ENCODE measurements at regions of chr6 and their contacts with region 1.

Region 1: GRCh38 chr6:43454696-43455530 is 435 bp downstream of the DLK2 start:
- DNase-seq: peak in 1 of 2 experiments; percentile 58
- H3K4me3 ChIP-seq: peak overlapping the region; percentile 19 to 63 (median 40)
- H3K27ac ChIP-seq: no peak overlapping the region
- H3K4me1 ChIP-seq: peaks cover 0 to 4% (median 2%) of the 10 kb centered on the region in 4 experiments; a peak in 3 of 7 replicates
- H3K27me3 ChIP-seq: peaks cover 7 to 25% (median 19%) of the 10 kb centered on the region in 4 experiments
- CTCF ChIP-seq: no peak
- EP300 ChIP-seq: no peak
- POLR2A ChIP-seq: no peak; a peak in 1 of 3 replicates
- RAD21 ChIP-seq: no peak

Region 2: DNA sequence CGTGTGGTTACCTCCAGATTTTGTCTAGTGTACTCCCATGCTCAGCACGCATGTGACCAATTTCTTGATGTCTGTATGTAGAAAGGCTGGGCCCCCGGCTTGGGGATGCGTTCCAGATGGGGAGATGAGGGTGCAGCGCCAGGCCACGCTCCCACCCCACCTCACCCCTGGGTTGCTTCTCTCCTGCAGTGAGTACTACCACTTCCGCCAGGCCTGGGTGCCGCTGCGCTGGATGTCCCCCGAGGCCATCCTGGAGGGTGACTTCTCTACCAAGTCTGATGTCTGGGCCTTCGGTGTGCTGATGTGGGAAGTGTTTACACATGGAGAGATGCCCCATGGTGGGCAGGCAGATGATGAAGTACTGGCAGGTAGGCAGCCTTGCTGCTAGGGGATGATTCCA is 295.3 kb before region 1 on chr6:
- CTCF ChIA-PET with region 1: no interaction called
- POLR2A ChIA-PET with region 1: no interaction called
- DNase-seq: no peak
- H3K4me3 ChIP-seq: no peak overlapping the region
- H3K27ac ChIP-seq: no peak overlapping the region
- H3K4me1 ChIP-seq: no peaks in the 10 kb centered on the region
- H3K27me3 ChIP-seq: no peaks in the 10 kb centered on the region
- CTCF ChIP-seq: no peak
- EP300 ChIP-seq: no peak
- POLR2A ChIP-seq: no peak
- RAD21 ChIP-seq: no peak

Region 3: DNA sequence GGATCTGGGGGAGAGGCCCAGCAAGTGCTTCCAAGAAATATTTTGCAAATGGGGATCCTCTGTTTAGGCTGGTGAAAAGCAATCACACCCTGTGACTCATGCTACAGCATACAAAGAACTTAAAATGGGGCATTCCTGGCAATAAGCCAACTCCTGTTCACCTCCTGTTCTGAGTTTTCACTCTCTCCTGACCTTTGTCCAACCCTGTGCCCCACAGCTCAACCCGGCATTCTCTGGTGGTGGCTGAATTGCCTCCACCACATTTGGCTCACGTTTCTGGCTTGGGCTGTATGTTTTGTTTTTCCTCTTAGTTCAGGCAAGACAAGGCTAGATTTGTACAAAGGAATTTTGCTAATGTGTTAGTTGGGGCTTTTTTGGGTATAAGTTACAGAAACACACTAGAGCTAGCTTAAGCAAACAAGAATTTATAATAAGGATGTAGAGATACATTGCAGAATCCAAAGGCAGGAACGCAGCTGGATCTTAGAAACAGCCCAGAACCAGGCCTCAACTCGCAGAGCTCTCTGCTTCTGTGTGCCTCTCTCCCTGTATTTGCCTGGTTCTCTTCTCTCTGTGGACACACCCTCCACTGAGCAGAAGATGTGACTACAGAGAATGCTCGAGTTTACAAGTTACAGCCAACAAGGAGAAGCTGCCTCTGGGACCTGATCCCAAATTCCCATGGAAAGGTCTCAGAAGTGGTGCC is 18.2 kb before region 1 on chr6:
- CTCF ChIA-PET with region 1: interaction called, 46 read pairs
- POLR2A ChIA-PET with region 1: interaction called, 34 read pairs
- DNase-seq: no peak
- H3K4me3 ChIP-seq: no peak overlapping the region
- H3K27ac ChIP-seq: no peak overlapping the region
- H3K4me1 ChIP-seq: no peaks in the 10 kb centered on the region; a peak in 2 of 7 replicates
- H3K27me3 ChIP-seq: no peaks in the 10 kb centered on the region
- CTCF ChIP-seq: no peak
- EP300 ChIP-seq: no peak
- POLR2A ChIP-seq: no peak
- RAD21 ChIP-seq: no peak

Region 4: GRCh38 chr6:43444036-43444435 is 10.9 kb before region 1 on chr6:
- CTCF ChIA-PET with region 1: interaction called, 21 read pairs
- POLR2A ChIA-PET with region 1: interaction called, 34 read pairs
- DNase-seq: no peak
- H3K4me3 ChIP-seq: no peak overlapping the region
- H3K27ac ChIP-seq: no peak overlapping the region
- H3K4me1 ChIP-seq: no peaks in the 10 kb centered on the region
- H3K27me3 ChIP-seq: no peaks in the 10 kb centered on the region
- CTCF ChIP-seq: no peak
- EP300 ChIP-seq: no peak
- POLR2A ChIP-seq: no peak
- RAD21 ChIP-seq: no peak

Region 5: GRCh38 chr6:43465948-43466347 is 11.0 kb after region 1 on chr6:
- CTCF ChIA-PET with region 1: interaction called, 17 read pairs
- POLR2A ChIA-PET with region 1: interaction called, 10 read pairs
- DNase-seq: no peak
- H3K4me3 ChIP-seq: no peak overlapping the region
- H3K27ac ChIP-seq: no peak overlapping the region
- H3K4me1 ChIP-seq: peaks cover 0 to 8% (median 5%) of the 10 kb centered on the region in 4 experiments; a peak in 4 of 7 replicates
- H3K27me3 ChIP-seq: no peaks in the 10 kb centered on the region; a peak in 1 of 7 replicates
- CTCF ChIP-seq: no peak
- EP300 ChIP-seq: no peak
- POLR2A ChIP-seq: no peak
- RAD21 ChIP-seq: no peak

Region 6: GRCh38 chr6:43471399-43471798 is 16.5 kb after region 1 on chr6:
- CTCF ChIA-PET with region 1: interaction called, 17 read pairs
- POLR2A ChIA-PET with region 1: interaction called, 10 read pairs
- DNase-seq: no peak
- H3K4me3 ChIP-seq: no peak overlapping the region
- H3K27ac ChIP-seq: no peak overlapping the region
- H3K4me1 ChIP-seq: peaks cover 0 to 8% (median 5%) of the 10 kb centered on the region in 4 experiments; a peak in 4 of 7 replicates
- H3K27me3 ChIP-seq: no peaks in the 10 kb centered on the region
- CTCF ChIP-seq: no peak
- EP300 ChIP-seq: no peak
- POLR2A ChIP-seq: no peak
- RAD21 ChIP-seq: no peak

Region 7: DNA sequence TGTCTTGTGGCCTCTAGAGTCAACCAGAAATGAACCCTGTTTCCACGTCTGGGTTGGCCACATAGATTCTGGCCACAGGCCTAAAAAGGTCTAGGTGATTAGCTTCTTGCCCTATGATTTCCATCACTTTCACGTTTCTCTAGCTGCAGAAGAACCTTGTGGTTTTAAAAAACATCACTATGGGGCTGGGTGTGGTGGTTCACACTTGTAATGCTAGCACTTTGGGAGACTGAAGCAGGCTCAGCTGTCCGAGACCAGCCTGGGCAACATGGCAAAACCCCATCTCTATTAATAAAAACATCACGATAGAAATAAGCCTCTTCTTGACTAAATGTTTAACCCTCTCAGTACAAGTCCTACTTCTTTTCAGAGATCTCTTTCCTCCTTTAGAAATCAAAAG is 89.5 kb after region 1 on chr6:
- CTCF ChIA-PET with region 1: no interaction called
- POLR2A ChIA-PET with region 1: no interaction called
- DNase-seq: no peak
- H3K4me3 ChIP-seq: no peak overlapping the region
- H3K27ac ChIP-seq: no peak overlapping the region
- H3K4me1 ChIP-seq: no peaks in the 10 kb centered on the region
- H3K27me3 ChIP-seq: no peaks in the 10 kb centered on the region; a peak in 1 of 7 replicates
- CTCF ChIP-seq: no peak
- EP300 ChIP-seq: no peak
- POLR2A ChIP-seq: no peak
- RAD21 ChIP-seq: no peak

Measured in H1 (cell line).